Mammary epithelial cell (primary cell): ENCODE measurements at regions of chr2 and their contacts with region 1.

Region 1: GRCh38 chr2:53403792-53404413 is 363.7 kb upstream of the CHAC2 start:
- DNase-seq: peak; percentile 96
- H3K4me3 ChIP-seq: no peak overlapping the region
- H3K27ac ChIP-seq: peak overlapping the region; percentile 98
- H3K4me1 ChIP-seq: peaks cover 59% of the 10 kb centered on the region
- H3K27me3 ChIP-seq: no peaks in the 10 kb centered on the region
- CTCF ChIP-seq: no peak

Region 2: GRCh38 chr2:53286345-53286744 is 117.6 kb before region 1 on chr2:
- CTCF ChIA-PET with region 1: no interaction called
- dilution Hi-C with region 1: no loop called
- in situ Hi-C with region 1: no loop called
- intact Hi-C with region 1: loop called (anchors 10 kb)
- DNase-seq: peak; percentile 87
- H3K4me3 ChIP-seq: no peak overlapping the region
- H3K27ac ChIP-seq: no peak overlapping the region
- H3K4me1 ChIP-seq: peaks cover 8% of the 10 kb centered on the region
- H3K27me3 ChIP-seq: no peaks in the 10 kb centered on the region
- CTCF ChIP-seq: no peak

Region 3: GRCh38 chr2:53312721-53313120 is 91.2 kb before region 1 on chr2:
- CTCF ChIA-PET with region 1: no interaction called
- dilution Hi-C with region 1: loop called (anchors 5 kb)
- in situ Hi-C with region 1: no loop called
- intact Hi-C with region 1: loop called (anchors 2 kb)
- DNase-seq: peak; percentile 31
- H3K4me3 ChIP-seq: no peak overlapping the region
- H3K27ac ChIP-seq: peak overlapping the region; percentile 92
- H3K4me1 ChIP-seq: peaks cover 25% of the 10 kb centered on the region
- H3K27me3 ChIP-seq: no peaks in the 10 kb centered on the region
- CTCF ChIP-seq: no peak

Region 4: DNA sequence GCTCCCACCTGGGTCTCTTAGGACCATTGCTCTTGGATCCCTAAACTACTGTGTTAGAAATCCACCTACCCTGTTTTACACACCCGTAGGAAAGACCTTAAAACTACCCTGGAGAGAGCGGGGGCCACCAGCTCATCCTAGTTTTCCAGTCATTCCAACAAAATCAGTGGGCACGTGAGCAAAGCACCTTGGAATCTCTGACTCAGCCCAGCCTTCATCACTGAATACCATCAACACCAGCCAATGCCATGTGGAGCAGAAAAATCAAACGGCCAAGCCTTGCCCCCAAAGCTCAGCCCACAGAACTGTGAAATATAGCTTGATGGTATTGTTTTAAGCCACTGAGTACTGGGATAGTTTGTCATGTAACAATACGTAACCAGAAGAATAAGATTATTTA is 86.0 kb before region 1 on chr2:
- CTCF ChIA-PET with region 1: no interaction called
- dilution Hi-C with region 1: loop called (anchors 5 kb)
- in situ Hi-C with region 1: no loop called
- intact Hi-C with region 1: loop called (anchors 2 kb)
- DNase-seq: peak; percentile 21
- H3K4me3 ChIP-seq: no peak overlapping the region
- H3K27ac ChIP-seq: no peak overlapping the region
- H3K4me1 ChIP-seq: peaks cover 20% of the 10 kb centered on the region
- H3K27me3 ChIP-seq: no peaks in the 10 kb centered on the region
- CTCF ChIP-seq: no peak